Common myeloid progenitor, CD34-positive (primary cell): ENCODE measurements at regions of chr5 and their contacts with region 1.

Region 1: DNA sequence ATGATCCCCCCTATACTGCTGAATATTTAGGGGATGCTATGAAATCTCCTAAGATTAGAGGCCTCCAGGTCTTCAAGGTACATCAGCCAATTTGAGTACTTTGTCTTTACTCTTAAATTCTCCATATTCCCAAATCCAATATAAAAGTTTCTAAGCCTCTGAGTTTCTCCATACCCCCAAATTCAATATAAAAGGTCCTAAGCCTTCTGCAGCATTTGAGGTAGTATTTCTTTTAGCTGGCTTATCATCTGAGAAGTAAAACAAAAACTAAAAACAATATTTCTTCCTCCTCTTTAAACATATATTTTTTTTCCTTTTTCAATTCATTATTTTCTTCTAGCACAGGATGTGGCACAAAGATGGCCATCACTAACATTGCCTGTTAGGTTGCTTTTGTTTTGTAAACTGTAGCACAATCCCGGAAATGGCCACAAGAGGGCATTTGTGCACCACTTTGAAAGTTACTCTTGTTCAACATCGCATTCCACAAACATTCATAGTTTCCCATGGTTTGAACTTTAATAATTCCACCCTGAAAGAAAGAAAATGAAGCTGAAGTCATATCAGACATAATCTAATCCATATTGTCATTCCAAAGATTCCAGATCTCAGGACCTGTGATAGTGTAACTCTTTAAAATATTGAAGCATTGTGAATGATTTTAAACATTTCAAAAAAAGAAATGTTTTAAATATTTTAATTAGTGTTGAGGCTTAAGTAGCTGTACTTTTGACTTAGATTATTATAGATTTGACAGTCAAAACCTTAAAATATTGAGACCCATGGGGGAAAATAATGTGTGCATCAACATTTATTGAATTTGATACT is 21.0 kb upstream of the SCGB3A2 start:
- DNase-seq: peak; percentile 63 to 75 (median 68)
- H3K4me3 ChIP-seq: no peak overlapping the region
- H3K27ac ChIP-seq: no peak overlapping the region
- H3K4me1 ChIP-seq: peaks cover 11 to 22% (median 12%) of the 10 kb centered on the region in 4 experiments
- H3K27me3 ChIP-seq: no peaks in the 10 kb centered on the region

Region 2: GRCh38 chr5:147628058-147628895 is 229.2 kb before region 1 on chr5:
- CTCF ChIA-PET with region 1: interaction called, 12 read pairs
- POLR2A ChIA-PET with region 1: no interaction called
- DNase-seq: peak; percentile 76 to 86 (median 77)
- H3K4me3 ChIP-seq: no peak overlapping the region
- H3K27ac ChIP-seq: no peak overlapping the region
- H3K4me1 ChIP-seq: no peaks in the 10 kb centered on the region
- H3K27me3 ChIP-seq: no peaks in the 10 kb centered on the region

Region 3: DNA sequence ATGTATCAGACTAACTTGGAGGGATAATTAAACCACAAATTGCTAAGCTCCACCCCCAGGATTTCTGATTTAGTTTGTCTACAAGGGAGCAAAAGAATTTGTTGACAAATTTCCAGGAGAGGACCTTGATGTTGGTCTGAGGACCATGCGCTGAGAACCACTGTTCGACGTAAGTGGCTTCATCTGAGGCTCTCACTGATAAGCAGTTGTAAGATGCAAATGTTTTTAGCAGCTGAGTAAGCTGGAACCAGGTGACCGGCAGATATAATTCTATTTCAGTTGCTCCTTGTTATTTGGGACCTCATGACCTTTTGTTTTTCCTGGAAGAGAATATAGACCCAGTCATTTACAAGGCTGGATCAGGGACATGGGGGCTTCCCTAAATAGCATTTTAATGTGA is 11.9 kb before region 1 on chr5:
- CTCF ChIA-PET with region 1: interaction called, 11 read pairs
- POLR2A ChIA-PET with region 1: no interaction called
- DNase-seq: no peak
- H3K4me3 ChIP-seq: no peak overlapping the region
- H3K27ac ChIP-seq: no peak overlapping the region
- H3K4me1 ChIP-seq: no peaks in the 10 kb centered on the region
- H3K27me3 ChIP-seq: no peaks in the 10 kb centered on the region

Region 4: DNA sequence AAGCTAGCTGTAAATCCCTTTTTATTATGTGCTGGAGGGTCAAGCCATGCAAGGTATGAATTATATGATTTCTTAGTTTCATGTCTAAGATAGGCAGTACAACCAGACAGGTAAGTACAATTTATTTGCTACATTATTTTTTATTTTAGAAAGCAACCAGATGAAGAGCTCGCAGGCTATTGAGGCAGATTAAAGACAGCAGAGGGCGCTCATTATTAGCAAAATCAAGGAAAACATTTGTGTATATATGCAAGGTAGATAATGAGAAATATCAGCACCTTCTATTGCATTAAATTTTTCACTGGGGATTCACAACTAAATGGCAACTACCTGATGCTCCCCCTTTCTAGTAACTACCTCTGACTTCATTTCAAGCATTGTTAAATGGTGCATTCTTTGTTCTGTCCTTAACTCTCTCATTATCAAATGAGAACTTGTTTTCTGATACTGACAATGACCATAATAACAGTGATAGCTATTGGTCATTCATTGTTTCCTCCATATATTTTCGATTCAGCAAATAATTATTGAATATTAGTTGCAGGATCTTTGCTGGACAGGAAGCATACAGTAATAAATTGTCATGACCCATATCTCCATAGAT is 29.6 kb after region 1 on chr5:
- CTCF ChIA-PET with region 1: interaction called, 25 read pairs
- POLR2A ChIA-PET with region 1: no interaction called
- DNase-seq: peak; percentile 58 to 78 (median 72)
- H3K4me3 ChIP-seq: no peak overlapping the region
- H3K27ac ChIP-seq: no peak overlapping the region
- H3K4me1 ChIP-seq: peaks cover 0 to 3% (median 0%) of the 10 kb centered on the region in 4 experiments
- H3K27me3 ChIP-seq: no peaks in the 10 kb centered on the region

Region 5: GRCh38 chr5:147935032-147935431 is 77.5 kb after region 1 on chr5:
- CTCF ChIA-PET with region 1: interaction called, 118 read pairs
- POLR2A ChIA-PET with region 1: no interaction called
- DNase-seq: peak; percentile 71 to 83 (median 82)
- H3K4me3 ChIP-seq: no peak overlapping the region
- H3K27ac ChIP-seq: no peak overlapping the region
- H3K4me1 ChIP-seq: peaks cover 0 to 12% (median 1%) of the 10 kb centered on the region in 4 experiments
- H3K27me3 ChIP-seq: no peaks in the 10 kb centered on the region